ENCODE measurements at regions of chr17 and their contacts with region 1.

Region 1: GRCh38 chr17:55607731-55608341 is 96.6 kb upstream of the SMIM36 start:
- DNase-seq: peak in 1 of 2 experiments; percentile 77
- H3K4me3 ChIP-seq: no peak overlapping the region
- H3K27ac ChIP-seq: no peak overlapping the region
- H3K4me1 ChIP-seq: no peaks in the 10 kb centered on the region
- H3K27me3 ChIP-seq: peaks cover 25% of the 10 kb centered on the region; the same call in 1 of the 2 replicates
- CTCF ChIP-seq: no peak

Region 2: GRCh38 chr17:55421179-55421934 is 186.5 kb before region 1 on chr17 and contains the start of gene MMD:
- CTCF ChIA-PET with region 1: no interaction called
- POLR2A ChIA-PET with region 1: no interaction called
- intact Hi-C with region 1: no loop called
- DNase-seq: no peak
- H3K4me3 ChIP-seq: peak within 1 kb of the TSS; percentile 97
- H3K27ac ChIP-seq: no peak within 1 kb of the TSS
- H3K4me1 ChIP-seq: peaks cover 21% of the 10 kb centered on the region; the same call in 1 of the 2 replicates
- H3K27me3 ChIP-seq: no peaks in the 10 kb centered on the region
- CTCF ChIP-seq: no peak
- total RNA-seq, gene MMD: 7.2 and 9.9 TPM in 2 replicates

Region 3: DNA sequence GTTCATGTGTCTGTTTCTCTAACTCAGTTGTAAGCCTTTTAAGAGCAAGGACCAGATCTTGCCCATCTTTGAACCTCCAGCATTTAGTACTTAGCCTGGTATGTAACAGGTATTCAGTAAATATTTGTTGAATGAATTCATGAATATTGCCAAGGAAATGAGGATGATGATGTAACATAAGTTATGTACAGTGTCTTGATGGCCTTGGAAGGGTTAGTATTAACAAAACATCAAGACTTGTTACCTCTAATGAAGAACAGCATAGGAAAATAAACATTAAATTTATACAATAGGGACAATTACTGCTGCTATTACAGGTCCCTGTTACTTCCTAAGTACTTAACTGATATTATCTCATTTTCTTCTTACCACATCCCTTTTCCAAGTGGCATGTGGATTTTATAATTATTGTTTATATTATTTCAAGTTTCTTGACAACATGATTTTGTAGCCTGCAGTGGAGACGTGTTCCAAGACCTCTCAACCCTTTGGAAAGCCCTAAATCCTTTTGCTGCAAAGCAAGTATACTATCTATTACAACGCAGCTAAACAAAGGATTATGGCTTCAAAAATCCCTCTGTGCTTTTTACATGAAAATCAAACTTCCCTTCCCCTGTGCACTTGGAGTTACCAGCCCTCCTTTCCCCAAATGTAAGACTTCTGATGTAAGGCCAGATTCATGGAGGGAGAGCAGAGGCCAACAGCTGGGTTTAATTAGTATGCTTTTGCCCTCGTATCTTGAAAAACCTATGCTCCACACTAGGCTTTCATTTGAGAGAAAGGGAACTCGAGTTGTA is 19.2 kb before region 1 on chr17:
- CTCF ChIA-PET with region 1: no interaction called
- POLR2A ChIA-PET with region 1: interaction called, 25 read pairs
- intact Hi-C with region 1: no loop called
- DNase-seq: peak in 1 of 2 experiments; percentile 52
- H3K4me3 ChIP-seq: no peak overlapping the region
- H3K27ac ChIP-seq: no peak overlapping the region
- H3K4me1 ChIP-seq: peaks cover 22% of the 10 kb centered on the region
- H3K27me3 ChIP-seq: no peaks in the 10 kb centered on the region
- CTCF ChIP-seq: no peak